Activated CD4-positive, alpha-beta T cell treated with anti-CD3 and anti-CD28 coated beads for 36 hours (primary cell): ENCODE measurements at regions of chr17 and their contacts with region 1.

Region 1: DNA sequence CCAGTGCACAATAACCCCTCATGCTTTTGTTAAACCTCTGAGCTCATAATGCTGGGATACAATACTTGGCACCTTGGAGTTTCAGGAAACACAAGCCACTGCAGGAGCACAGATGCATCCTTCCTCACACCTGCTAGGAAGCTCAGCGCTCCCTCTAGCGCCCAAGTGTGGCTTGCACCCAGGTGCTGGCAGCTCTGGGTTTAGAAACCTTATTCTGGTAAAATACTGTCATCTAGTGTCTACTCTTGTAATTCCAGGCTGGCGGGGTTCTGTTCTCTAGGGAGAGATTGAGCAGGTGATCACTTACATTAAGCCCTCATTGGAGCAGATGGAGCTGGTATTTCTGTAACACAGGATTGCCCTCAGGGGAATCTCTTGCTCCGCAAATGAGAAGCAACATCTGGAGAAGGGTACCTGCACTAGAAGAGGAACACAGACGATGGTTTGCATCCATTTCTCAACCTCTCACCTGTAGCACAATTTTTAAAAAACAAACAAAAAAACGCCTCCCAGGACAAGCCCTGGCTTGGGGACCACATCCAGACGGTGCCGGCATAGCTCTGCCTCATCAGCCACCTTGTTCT is 1.5 kb downstream of the CCL1 start:
- DNase-seq: peak; percentile 91
- ATAC-seq: peak; percentile 98
- H3K4me3 Mint-ChIP-seq: no peak overlapping the region
- H3K27ac Mint-ChIP-seq: no peak overlapping the region
- H3K4me1 Mint-ChIP-seq: peaks cover 10% of the 10 kb centered on the region
- H3K27me3 Mint-ChIP-seq: peaks cover 20% of the 10 kb centered on the region

Region 2: GRCh38 chr17:33779225-33779591 is 582.4 kb before region 1 on chr17:
- CTCF ChIA-PET with region 1: interaction called, 13 read pairs
- POLR2A ChIA-PET with region 1: no interaction called
- intact Hi-C with region 1: loop called in 1 of 2 experiments (anchors 1 kb)
- DNase-seq: peak; percentile 59
- ATAC-seq: no peak
- H3K4me3 Mint-ChIP-seq: no peak overlapping the region
- H3K27ac Mint-ChIP-seq: no peak overlapping the region
- H3K4me1 Mint-ChIP-seq: no peaks in the 10 kb centered on the region
- H3K27me3 Mint-ChIP-seq: peaks cover 22% of the 10 kb centered on the region

Region 3: DNA sequence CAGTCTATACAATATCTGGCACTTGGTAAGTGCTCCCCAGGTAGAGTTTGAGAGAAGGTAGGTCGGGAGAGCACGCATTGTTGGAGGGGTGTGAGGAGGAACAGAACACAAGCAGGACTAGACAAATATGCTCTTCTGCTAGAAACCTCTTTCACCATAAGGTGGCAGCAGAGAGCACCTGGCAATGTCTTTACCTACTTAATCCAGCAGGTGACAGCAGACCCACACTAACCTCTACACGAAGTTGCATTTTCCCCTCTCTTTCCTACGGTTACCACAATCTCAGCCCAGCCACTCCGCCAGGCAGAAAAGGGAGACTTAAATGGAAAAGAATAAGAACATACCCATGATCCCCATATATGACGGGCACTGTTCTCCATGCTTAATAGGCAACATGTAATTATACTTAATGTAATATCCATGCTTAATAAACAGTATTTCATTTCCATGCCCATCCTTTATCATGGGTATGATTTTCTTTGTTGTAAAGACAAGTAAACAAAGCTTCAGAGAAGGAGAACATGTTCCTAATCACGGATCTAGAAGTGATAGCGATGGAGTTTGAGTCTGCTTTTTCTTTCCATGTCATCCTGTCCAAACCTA is 161.5 kb before region 1 on chr17:
- CTCF ChIA-PET with region 1: interaction called, 225 read pairs
- POLR2A ChIA-PET with region 1: interaction called, 3 read pairs
- intact Hi-C with region 1: loop called (anchors 1 kb)
- DNase-seq: peak; percentile 82
- ATAC-seq: peak; percentile 69
- H3K4me3 Mint-ChIP-seq: no peak overlapping the region
- H3K27ac Mint-ChIP-seq: no peak overlapping the region
- H3K4me1 Mint-ChIP-seq: peaks cover 15% of the 10 kb centered on the region
- H3K27me3 Mint-ChIP-seq: peaks cover 43% of the 10 kb centered on the region

Region 4: DNA sequence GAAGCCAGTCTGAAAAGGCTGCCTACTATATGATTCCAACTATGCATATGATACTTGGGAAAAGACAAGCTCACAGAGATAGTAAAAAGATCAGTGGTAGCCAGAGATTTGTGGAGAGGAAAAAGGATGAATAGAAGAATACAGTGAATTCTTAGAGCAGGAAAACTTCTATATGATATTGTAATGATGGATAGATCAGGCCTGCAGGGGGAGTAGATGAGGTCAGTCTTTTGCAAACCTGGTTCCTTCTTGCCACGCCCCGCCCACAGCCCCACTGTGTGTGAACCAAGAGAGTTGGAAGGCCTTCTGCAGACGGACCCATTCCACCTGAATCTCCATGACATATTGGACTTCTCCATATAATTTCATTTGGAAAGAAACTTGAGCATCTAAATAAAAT is 43.1 kb before region 1 on chr17:
- CTCF ChIA-PET with region 1: interaction called, 10 read pairs
- POLR2A ChIA-PET with region 1: no interaction called
- intact Hi-C with region 1: no loop called
- DNase-seq: peak; percentile 38
- ATAC-seq: no peak
- H3K4me3 Mint-ChIP-seq: no peak overlapping the region
- H3K27ac Mint-ChIP-seq: no peak overlapping the region
- H3K4me1 Mint-ChIP-seq: no peaks in the 10 kb centered on the region
- H3K27me3 Mint-ChIP-seq: peaks cover 6% of the 10 kb centered on the region

Region 5: DNA sequence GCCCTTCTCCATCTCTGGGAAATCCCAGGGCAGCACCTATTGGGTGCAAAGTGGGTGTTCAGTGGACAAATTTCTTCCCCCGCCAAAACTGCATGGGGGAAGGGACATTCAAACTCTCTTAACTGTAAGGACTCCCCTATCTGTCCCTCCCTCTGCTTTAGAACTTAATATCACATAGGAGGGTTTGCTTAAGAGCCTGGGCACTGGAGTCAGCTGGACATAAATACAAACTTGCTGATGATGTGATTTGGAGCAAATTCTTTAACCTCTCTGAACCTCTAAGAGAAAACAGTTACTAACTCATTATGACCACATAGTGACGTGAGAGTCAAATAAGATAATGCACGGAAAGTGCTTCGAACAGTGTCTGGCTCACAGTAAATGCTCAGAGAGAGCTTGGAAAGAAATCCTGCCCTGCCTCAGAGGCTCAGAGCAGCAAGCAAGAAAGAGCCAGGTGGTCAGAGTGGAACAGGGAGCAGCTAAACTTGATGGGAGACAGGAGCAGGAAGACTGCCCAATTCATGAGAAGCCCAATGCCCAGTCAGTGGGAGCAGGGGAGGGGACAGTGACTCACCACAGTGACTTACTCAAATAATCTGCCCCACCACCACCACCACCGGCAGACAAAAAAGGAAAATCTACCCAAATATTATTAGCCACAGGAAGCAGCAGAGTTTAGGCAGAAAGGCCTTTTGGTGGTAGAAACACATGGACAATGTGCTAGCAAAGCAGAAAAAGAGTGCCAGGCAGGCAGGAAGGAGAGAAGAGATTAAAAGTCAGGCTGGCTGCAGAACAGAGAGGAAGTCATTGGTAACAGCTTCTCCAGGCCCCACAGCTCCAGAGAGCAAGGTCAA is 25.4 kb after region 1 on chr17:
- CTCF ChIA-PET with region 1: interaction called, 44 read pairs
- POLR2A ChIA-PET with region 1: no interaction called
- intact Hi-C with region 1: no loop called
- DNase-seq: no peak
- ATAC-seq: no peak
- H3K4me3 Mint-ChIP-seq: no peak overlapping the region
- H3K27ac Mint-ChIP-seq: no peak overlapping the region
- H3K4me1 Mint-ChIP-seq: peaks cover 28% of the 10 kb centered on the region
- H3K27me3 Mint-ChIP-seq: peaks cover 27% of the 10 kb centered on the region

Region 6: DNA sequence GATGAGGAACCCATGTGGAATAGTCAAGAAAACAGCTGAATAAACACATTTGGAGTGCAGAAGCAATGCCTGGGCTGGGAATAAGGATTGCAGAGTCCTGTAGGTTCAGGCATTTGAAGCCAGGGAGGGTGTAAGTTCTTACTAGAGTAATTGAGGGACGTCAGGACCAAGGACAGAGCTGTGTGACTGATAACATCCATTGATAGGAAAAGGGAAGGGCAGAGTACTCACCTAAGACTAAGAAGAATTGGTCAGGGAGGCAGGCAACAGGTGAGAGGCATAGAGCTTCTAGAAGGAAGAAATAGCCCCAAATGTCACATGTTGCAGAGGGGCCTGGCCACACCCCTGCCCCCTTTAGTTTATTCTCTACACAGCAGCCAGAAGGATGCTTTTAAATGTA is 138.0 kb after region 1 on chr17:
- CTCF ChIA-PET with region 1: no interaction called
- POLR2A ChIA-PET with region 1: no interaction called
- intact Hi-C with region 1: no loop called
- DNase-seq: peak; percentile 30
- ATAC-seq: no peak
- H3K4me3 Mint-ChIP-seq: no peak overlapping the region
- H3K27ac Mint-ChIP-seq: no peak overlapping the region
- H3K4me1 Mint-ChIP-seq: peaks cover 5% of the 10 kb centered on the region
- H3K27me3 Mint-ChIP-seq: peaks cover 23% of the 10 kb centered on the region